ENCODE measurements at regions of chr14 and their contacts with region 1.

Region 1: GRCh38 chr14:69398053-69398817 is at the starts of genes ERH and SLC39A9:
- DNase-seq: peak; percentile 83
- ATAC-seq: peak; percentile 85
- H3K4me3 Mint-ChIP-seq: peak within 1 kb of the TSS; percentile 89
- H3K27ac Mint-ChIP-seq: peak within 1 kb of the TSS; percentile 96
- H3K4me1 Mint-ChIP-seq: peaks cover 64% of the 10 kb centered on the region
- H3K27me3 Mint-ChIP-seq: no peaks in the 10 kb centered on the region
- CTCF ChIP-seq: no peak
- total RNA-seq, gene ERH: 252 and 273 TPM in 2 replicates
- total RNA-seq, gene SLC39A9: 46.4 and 54.5 TPM in 2 replicates

Region 2: DNA sequence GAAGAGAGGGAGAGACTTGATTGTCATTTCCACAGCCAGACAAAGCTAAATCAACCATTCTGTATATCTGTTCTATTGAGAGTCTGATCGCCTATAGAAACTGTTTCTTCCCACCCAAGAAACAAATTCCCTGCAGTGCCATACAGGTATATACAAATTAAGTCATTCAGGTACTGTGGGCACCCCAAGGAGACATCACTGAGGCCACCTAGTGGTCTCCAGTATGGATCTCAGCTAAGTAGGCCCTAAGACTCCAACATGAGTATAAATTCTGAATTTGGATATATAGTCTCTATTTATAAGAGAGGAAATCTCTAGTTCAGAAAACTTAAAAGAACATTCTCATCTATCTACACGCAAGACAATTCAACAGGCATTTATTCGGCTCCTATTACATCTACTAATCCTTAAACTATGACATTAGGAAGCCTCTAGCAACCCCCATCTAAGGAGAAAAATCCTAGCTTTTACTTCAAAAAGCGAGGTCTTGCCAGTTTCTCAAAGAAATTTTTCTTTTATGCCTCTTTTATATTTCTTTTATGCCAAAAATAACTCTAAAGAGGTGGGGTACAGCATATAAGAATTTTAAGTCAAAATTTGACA is 307.9 kb before region 1 on chr14:
- CTCF ChIA-PET with region 1: no interaction called
- POLR2A ChIA-PET with region 1: no interaction called
- intact Hi-C with region 1: no loop called
- DNase-seq: no peak
- ATAC-seq: no peak
- H3K4me3 Mint-ChIP-seq: no peak overlapping the region
- H3K27ac Mint-ChIP-seq: no peak overlapping the region
- H3K4me1 Mint-ChIP-seq: no peaks in the 10 kb centered on the region
- H3K27me3 Mint-ChIP-seq: no peaks in the 10 kb centered on the region
- CTCF ChIP-seq: no peak

Region 3: GRCh38 chr14:69153131-69153872 is 244.9 kb before region 1 on chr14:
- CTCF ChIA-PET with region 1: no interaction called
- POLR2A ChIA-PET with region 1: interaction called, 5 read pairs
- intact Hi-C with region 1: loop called (anchors 1 kb)
- DNase-seq: peak; percentile 81
- ATAC-seq: peak; percentile 93
- H3K4me3 Mint-ChIP-seq: peak overlapping the region; percentile 95
- H3K27ac Mint-ChIP-seq: peak overlapping the region; percentile 88
- H3K4me1 Mint-ChIP-seq: peaks cover 28% of the 10 kb centered on the region
- H3K27me3 Mint-ChIP-seq: no peaks in the 10 kb centered on the region
- CTCF ChIP-seq: no peak

Region 4: GRCh38 chr14:69260861-69261564 is 137.2 kb before region 1 on chr14:
- CTCF ChIA-PET with region 1: interaction called, 3 read pairs
- POLR2A ChIA-PET with region 1: no interaction called
- intact Hi-C with region 1: loop called (anchors 1 kb)
- DNase-seq: peak; percentile 52
- ATAC-seq: peak; percentile 76
- H3K4me3 Mint-ChIP-seq: peak overlapping the region; percentile 76
- H3K27ac Mint-ChIP-seq: no peak overlapping the region
- H3K4me1 Mint-ChIP-seq: peaks cover 13% of the 10 kb centered on the region
- H3K27me3 Mint-ChIP-seq: peaks cover 68% of the 10 kb centered on the region
- CTCF ChIP-seq: no peak

Region 5: GRCh38 chr14:69387311-69387710 is 10.9 kb before region 1 on chr14:
- CTCF ChIA-PET with region 1: no interaction called
- POLR2A ChIA-PET with region 1: interaction called, 16 read pairs
- intact Hi-C with region 1: no loop called
- DNase-seq: no peak
- ATAC-seq: no peak
- H3K4me3 Mint-ChIP-seq: no peak overlapping the region
- H3K27ac Mint-ChIP-seq: no peak overlapping the region
- H3K4me1 Mint-ChIP-seq: peaks cover 30% of the 10 kb centered on the region
- H3K27me3 Mint-ChIP-seq: no peaks in the 10 kb centered on the region
- CTCF ChIP-seq: no peak

Region 6: DNA sequence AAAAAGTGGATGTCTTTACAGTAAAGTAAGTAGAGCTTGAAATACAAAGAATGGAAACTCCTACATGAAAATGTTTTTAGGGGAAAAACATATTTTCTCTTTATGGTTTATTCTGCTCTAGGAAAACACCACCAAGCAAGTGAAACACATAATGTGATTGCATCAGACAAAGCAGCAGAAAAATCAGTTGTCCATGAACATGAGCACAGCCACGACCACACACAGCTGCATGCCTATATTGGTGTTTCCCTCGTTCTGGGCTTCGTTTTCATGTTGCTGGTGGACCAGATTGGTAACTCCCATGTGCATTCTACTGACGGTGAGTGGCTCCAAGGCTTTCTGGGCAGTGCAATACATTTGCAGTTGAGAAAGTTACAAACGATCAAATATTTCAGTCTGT is 43.7 kb after region 1 on chr14:
- CTCF ChIA-PET with region 1: no interaction called
- POLR2A ChIA-PET with region 1: interaction called, 26 read pairs
- intact Hi-C with region 1: loop called (anchors 5 kb)
- DNase-seq: no peak
- ATAC-seq: peak; percentile 87
- H3K4me3 Mint-ChIP-seq: peak overlapping the region; percentile 53
- H3K27ac Mint-ChIP-seq: peak overlapping the region; percentile 71
- H3K4me1 Mint-ChIP-seq: peaks cover 10% of the 10 kb centered on the region
- H3K27me3 Mint-ChIP-seq: no peaks in the 10 kb centered on the region
- CTCF ChIP-seq: no peak

Region 7: DNA sequence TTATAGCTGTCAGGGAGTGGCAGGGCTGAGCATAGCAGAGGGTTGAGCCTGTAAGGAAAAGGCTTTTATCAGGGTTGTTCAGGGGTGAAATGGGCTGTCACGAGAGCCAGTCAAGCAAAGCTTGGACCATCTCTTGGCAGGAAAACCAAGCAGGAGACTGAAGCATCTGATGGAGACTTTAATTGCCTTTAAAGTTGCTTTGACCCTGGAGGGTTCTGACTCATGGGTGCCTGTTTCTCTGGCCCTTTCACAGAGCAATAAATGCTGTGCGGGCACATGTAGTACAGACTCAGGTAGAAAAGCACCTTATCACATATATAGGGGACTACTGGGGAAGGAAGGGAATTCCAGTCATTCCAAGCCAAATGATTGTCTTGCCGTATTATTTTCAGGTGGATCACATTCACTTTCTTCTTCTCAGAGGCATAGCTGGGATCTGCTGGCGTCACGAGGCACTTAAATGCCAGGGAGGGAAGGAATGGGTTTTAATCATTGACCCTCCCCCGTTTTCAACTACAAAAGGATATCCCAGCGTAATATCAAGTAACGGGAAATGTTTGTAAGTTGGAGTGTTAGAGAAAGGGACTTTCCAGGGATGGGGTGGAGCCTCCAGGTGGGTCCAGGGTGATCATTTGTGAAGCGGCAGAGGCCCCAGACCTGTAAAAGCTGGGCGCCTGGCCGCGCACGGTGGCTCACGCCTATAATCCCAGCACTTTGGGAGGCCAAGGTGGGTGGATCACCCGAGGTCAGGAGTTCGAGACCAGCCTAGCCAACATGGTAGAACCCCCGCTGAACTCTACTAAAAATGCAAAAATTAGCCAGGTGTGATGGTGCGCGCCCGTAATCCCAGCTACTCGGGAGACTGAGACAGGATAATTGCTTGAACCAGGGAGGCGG is 121.2 kb after region 1 on chr14:
- CTCF ChIA-PET with region 1: no interaction called
- POLR2A ChIA-PET with region 1: no interaction called
- intact Hi-C with region 1: no loop called
- DNase-seq: no peak
- ATAC-seq: no peak
- H3K4me3 Mint-ChIP-seq: no peak overlapping the region
- H3K27ac Mint-ChIP-seq: no peak overlapping the region
- H3K4me1 Mint-ChIP-seq: no peaks in the 10 kb centered on the region
- H3K27me3 Mint-ChIP-seq: peaks cover 27% of the 10 kb centered on the region
- CTCF ChIP-seq: no peak

Region 8: GRCh38 chr14:69766984-69767368 is 368.7 kb after region 1 on chr14 and contains the start of gene SRSF5:
- CTCF ChIA-PET with region 1: no interaction called
- POLR2A ChIA-PET with region 1: interaction called, 7 read pairs
- intact Hi-C with region 1: loop called (anchors 1 kb)
- DNase-seq: peak; percentile 92
- ATAC-seq: peak; percentile 78
- H3K4me3 Mint-ChIP-seq: peak within 1 kb of the TSS; percentile 98
- H3K27ac Mint-ChIP-seq: peak within 1 kb of the TSS; percentile 100
- H3K4me1 Mint-ChIP-seq: peaks cover 51% of the 10 kb centered on the region
- H3K27me3 Mint-ChIP-seq: no peaks in the 10 kb centered on the region
- CTCF ChIP-seq: no peak
- total RNA-seq, gene SRSF5: 394 and 422 TPM in 2 replicates

Region 9: DNA sequence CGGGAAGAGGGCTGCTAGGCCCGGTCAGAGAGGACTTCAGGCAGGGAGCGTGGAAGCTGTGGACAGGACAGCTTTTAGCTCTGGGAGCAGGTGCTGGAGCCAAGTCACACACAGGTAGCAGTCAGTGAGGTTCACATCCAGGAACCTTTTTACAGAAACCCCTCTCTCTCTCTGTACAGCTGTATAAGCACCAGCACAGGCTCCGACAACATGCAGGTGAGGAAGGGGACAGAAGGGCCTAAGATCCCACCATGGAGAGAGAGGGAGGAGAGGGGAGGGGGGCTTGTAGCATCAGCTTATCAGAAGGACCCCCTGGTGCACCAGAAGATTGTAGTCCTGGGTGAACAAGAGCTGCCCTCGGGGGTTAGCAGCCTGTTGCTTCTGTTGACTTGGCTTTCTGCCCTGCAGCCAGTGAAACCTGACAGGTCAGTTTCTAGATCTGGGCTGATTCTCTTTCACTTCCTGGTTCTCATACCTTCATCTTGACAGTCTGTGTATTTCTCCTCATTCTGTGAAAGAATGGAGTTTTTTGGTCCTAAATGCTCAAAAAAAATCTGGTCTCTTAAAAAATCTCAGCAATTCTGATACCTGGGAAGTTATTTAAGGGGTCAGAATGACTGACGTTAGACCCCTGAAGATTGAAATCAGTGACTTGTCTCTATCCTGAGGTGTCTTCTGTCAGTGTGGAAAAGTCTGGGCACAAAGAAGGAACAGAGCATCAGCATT is 1267.1 kb after region 1 on chr14:
- CTCF ChIA-PET with region 1: no interaction called
- POLR2A ChIA-PET with region 1: no interaction called
- intact Hi-C with region 1: loop called (anchors 5 kb)
- DNase-seq: peak; percentile 40
- ATAC-seq: peak; percentile 62
- H3K4me3 Mint-ChIP-seq: peak overlapping the region; percentile 66
- H3K27ac Mint-ChIP-seq: peak overlapping the region; percentile 93
- H3K4me1 Mint-ChIP-seq: peaks cover 97% of the 10 kb centered on the region
- H3K27me3 Mint-ChIP-seq: no peaks in the 10 kb centered on the region
- CTCF ChIP-seq: no peak

Measured in activated B cell treated with CpG ODN at 0.5 μM for 24 hours (primary cell).